ENCODE measurements at regions of chr22 and their contacts with region 1.

Region 1: DNA sequence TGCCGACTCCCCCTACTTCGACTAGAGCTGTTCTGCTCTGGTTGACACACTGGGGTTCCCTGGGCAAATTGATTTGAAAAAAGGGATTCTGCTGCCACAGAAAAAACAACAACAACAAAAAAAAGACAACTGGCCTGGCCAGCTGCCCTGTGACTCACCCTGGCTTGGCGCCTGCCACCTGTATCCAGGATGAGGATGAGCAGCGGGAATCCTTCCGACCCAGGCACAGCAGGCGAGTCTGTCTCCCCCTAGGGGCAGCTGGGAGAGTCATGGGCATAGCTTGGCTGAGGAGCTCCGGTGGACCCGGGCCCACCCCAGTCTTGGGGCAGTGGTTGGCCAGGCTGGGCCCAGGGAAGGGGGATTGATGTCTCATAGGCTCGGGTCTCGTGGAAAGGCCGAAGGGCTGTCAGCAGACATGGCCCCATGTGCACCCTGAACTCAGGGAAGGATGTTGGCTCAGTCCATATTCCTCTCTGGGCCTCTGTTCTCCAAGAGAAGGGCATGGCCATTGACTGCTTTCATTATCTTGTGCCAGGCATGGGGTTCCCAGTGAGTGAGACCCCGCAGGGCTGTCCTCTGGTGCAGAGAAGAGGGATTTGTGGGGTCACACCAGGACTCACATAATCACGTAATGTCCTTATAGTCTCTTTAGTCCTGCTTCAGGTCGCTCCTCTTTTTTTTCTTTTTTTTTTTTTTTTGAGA is 10.4 kb upstream of the SUN2 start:
- DNase-seq: peak; percentile 77
- H3K4me3 ChIP-seq: no peak overlapping the region; a peak in 1 of 4 replicates
- H3K27ac ChIP-seq: no peak overlapping the region
- H3K4me1 ChIP-seq: peaks cover 0 to 3% of the 10 kb centered on the region in 2 experiments; a peak in 1 of 4 replicates
- H3K27me3 ChIP-seq: no peaks in the 10 kb centered on the region
- CTCF ChIP-seq: peak; percentile 65
- EP300 ChIP-seq: no peak
- RAD21 ChIP-seq: peak; percentile 35

Region 2: GRCh38 chr22:38788021-38788816 is 22.0 kb after region 1 on chr22:
- CTCF ChIA-PET with region 1: interaction called, 47 read pairs
- POLR2A ChIA-PET with region 1: no interaction called
- DNase-seq: peak; percentile 59
- H3K4me3 ChIP-seq: no peak overlapping the region
- H3K27ac ChIP-seq: peak overlapping the region; percentile 61 to 87
- H3K4me1 ChIP-seq: peaks cover 14 to 36% of the 10 kb centered on the region in 2 experiments; a peak in 3 of 4 replicates
- H3K27me3 ChIP-seq: no peaks in the 10 kb centered on the region
- CTCF ChIP-seq: no peak
- EP300 ChIP-seq: 0 out of 4 replicates have a peak, but pooled peaks of 1 of the 2 experiments have one; percentile 22
- RAD21 ChIP-seq: no peak

Region 3: GRCh38 chr22:38843201-38843715 is 77.0 kb after region 1 on chr22:
- CTCF ChIA-PET with region 1: interaction called, 25 read pairs
- POLR2A ChIA-PET with region 1: no interaction called
- DNase-seq: peak; percentile 84
- H3K4me3 ChIP-seq: peak overlapping the region in 1 of 2 experiments; percentile 37; a peak in 2 of 4 replicates
- H3K27ac ChIP-seq: no peak overlapping the region; a peak in 1 of 4 replicates
- H3K4me1 ChIP-seq: no peaks in the 10 kb centered on the region; a peak in 1 of 4 replicates
- H3K27me3 ChIP-seq: no peaks in the 10 kb centered on the region
- CTCF ChIP-seq: no peak; the same call in 1 of the 2 replicates
- EP300 ChIP-seq: no peak
- RAD21 ChIP-seq: no peak

Region 4: DNA sequence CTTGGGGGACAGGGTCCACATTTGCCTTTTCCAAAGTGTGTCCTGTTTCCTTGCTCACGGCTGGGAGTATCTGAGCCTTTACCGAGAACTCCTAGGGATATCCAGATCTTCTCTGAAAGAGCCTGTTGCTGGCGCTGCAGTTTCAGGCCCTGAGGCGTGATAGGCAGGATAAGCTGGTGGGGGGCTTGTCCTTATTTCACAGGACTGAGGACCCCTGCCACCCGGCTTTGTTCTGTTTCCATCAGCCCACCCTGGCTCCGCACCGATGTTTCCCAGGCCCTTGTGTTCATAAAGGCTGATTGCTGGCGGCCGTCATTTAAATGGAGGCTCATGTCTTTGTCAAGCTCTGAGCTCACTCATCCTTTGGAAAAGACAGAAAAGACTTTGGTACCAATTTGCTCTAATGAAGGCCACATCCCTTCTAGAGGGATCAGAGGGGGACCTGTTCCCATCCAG is 87.0 kb after region 1 on chr22:
- CTCF ChIA-PET with region 1: interaction called, 12 read pairs
- POLR2A ChIA-PET with region 1: no interaction called
- DNase-seq: no peak
- H3K4me3 ChIP-seq: no peak overlapping the region
- H3K27ac ChIP-seq: no peak overlapping the region
- H3K4me1 ChIP-seq: peaks cover 0 to 3% of the 10 kb centered on the region in 2 experiments; a peak in 2 of 4 replicates
- H3K27me3 ChIP-seq: no peaks in the 10 kb centered on the region
- CTCF ChIP-seq: no peak
- EP300 ChIP-seq: no peak
- RAD21 ChIP-seq: no peak

Region 5: GRCh38 chr22:38862375-38863329 is 96.4 kb after region 1 on chr22:
- CTCF ChIA-PET with region 1: interaction called, 25 read pairs
- POLR2A ChIA-PET with region 1: no interaction called
- DNase-seq: peak; percentile 60
- H3K4me3 ChIP-seq: no peak overlapping the region
- H3K27ac ChIP-seq: no peak overlapping the region
- H3K4me1 ChIP-seq: peaks cover 0 to 5% of the 10 kb centered on the region in 2 experiments; a peak in 1 of 4 replicates
- H3K27me3 ChIP-seq: no peaks in the 10 kb centered on the region
- CTCF ChIP-seq: no peak
- EP300 ChIP-seq: no peak
- RAD21 ChIP-seq: no peak

Region 6: DNA sequence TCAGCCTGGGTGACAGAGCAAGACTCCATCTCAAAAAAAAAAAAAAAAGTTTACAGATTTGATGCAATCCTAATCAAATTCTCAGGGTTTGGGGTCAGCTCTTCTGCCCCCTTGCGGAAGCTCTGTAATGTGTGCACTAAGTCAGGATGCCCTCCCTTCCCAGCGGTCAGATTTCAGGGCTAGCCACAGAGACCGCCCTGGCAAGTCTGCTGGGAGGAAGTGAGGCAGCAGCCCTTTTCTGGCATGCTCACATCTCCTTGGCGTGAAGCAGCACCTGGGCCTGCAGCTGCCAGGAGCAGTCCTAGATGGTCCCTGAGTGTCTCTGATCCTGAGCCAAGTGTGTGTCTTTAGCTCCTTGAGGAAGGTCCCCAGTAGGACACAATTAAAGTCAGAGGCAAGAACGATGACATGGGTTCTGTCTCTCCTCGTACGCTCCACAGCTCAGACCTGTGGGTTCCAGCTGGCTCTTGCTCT is 237.0 kb after region 1 on chr22:
- CTCF ChIA-PET with region 1: interaction called, 14 read pairs
- POLR2A ChIA-PET with region 1: no interaction called
- DNase-seq: peak; percentile 72
- H3K4me3 ChIP-seq: peak overlapping the region in 1 of 2 experiments; percentile 48; a peak in 1 of 4 replicates
- H3K27ac ChIP-seq: no peak overlapping the region
- H3K4me1 ChIP-seq: no peaks in the 10 kb centered on the region; a peak in 1 of 4 replicates
- H3K27me3 ChIP-seq: no peaks in the 10 kb centered on the region; the same call in 1 of the 2 replicates
- CTCF ChIP-seq: peak; percentile 64
- EP300 ChIP-seq: no peak
- RAD21 ChIP-seq: peak; percentile 53